ACHN (cell line): ENCODE measurements at regions of chr1 and their contacts with region 1.

Region 1: DNA sequence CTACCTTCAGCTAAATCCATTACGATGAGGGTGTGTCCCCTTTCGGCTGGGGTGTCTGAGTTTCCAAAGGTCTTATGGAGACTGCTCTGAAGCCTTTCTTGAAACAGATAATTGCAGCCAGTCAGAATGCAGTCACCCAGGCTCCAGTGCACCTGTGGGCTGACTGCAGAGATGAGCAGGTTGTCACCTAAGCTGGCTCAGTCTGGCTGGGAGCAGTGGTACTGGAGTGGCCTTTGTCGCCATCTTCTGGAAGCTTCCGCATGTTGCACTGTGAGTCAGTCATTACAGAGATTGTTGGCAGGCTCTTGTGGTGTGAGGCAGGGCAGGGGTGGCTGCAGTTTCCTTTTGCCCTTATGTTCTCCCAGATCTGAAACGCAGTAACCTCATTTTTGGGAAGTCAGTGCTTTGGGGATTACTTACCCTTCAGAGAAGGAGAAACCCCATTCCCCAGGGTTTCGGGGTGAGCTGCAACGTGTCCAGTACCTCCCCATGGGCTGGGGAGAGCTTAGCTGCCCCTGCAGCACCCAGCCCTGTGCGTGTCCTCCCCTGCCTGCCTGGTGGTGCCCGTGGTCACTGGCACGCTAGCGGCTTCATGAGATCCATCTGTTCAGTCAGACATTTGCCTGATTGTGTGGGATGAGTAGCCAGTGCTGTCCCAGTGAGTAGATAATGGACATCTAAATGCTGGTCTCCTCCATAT is 48.0 kb downstream of the SMYD2 start:
- DNase-seq: peak; percentile 82

Region 2: GRCh38 chr1:214537219-214537618 is 208.3 kb after region 1 on chr1:
- in situ Hi-C with region 1: no loop called
- DNase-seq: no peak

Region 3: DNA sequence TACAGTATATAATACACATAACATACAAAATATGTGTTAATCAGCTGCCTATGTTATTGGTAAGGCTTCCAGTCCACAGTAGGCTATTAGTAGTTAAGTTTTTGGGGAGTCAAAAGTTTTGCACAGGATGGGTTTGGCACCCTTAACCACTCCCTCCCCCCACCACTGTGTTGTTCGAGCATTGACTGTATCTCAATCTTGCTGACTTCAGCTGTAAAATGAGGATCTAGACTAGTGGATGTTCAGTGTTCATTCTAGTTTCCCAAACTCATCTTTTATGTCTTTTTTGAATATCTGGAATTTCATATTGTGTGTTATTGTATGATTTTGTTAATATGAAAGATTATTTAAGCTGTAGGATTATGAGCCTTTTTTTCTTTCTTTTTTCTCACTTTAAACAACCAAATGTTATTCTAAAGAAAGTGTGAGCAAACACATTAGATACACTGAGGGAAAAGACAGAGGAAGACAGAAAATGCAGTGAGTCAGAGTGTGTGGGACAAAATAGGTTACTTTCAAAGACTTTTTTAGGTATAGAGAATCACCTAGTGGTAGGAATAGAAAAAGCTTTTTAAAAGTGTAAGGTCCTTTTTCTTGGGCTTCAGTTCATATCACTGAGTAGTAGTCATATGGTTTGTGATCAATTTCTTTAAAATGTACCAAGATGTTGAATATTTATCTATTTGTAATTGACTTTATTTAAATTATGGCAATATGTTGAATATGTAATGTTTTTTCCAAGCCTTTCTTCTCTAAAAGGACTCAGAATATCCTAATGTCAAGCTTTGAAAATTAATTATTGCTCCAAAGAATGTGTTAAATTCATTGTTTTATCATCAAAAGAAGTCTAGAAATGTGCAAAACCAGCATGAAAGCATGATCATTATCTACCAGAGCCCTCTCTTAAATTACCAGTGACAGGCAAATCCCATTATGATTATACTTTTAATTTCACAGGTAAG is 256.2 kb after region 1 on chr1:
- in situ Hi-C with region 1: loop called (anchors 25 kb)
- DNase-seq: peak; percentile 89